ENCODE measurements at regions of chr6 and their contacts with region 1.

Region 1: DNA sequence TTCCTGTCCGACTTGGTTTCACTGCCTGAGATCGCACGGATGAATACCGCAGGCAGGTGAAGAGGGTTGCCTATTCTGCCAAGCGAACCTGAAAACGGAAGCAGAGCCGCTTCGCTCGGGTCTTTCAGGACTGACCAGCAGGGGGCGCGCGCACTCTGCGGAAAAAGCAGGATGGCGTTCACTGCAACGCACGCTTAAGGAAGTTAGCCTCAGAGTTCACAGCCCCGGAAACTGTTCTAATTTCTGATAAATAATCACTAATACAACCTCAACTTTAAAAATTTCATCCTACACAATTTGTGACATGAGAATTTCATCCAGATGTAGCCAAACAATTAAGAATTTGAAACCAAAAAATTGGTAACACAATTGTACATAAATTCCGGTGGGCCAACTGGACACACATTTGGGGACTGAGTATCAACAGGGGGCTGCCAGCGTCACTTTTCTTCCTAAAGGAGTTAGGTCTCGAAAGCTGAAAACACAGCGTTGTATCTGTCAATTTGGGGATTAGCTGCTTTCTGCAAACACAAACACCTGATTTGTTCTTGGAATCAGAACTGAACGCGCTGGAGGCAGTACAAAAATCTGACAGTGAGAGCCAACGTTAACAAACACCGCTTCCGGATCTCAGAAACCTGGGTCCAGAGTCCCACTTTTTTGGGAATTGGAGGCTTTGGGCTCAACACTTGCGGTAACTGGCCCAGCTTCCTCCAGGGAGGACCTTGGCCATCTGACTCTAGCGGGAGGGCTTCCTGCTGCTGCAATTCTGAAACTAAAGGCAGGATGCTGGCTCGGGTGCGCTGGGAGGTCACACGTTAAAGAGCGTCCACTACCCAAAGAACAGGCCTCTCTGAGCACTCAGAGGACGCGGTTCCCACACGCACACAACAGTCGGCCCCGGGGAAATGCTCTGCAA is 8.8 kb downstream of the PXDC1 start:
- DNase-seq: peak; percentile 74
- H3K4me3 ChIP-seq: no peak overlapping the region
- H3K27ac ChIP-seq: peak overlapping the region; percentile 13
- H3K4me1 ChIP-seq: peaks cover 23% of the 10 kb centered on the region
- H3K27me3 ChIP-seq: no peaks in the 10 kb centered on the region
- CTCF ChIP-seq: peak; percentile 82 to 90

Region 2: DNA sequence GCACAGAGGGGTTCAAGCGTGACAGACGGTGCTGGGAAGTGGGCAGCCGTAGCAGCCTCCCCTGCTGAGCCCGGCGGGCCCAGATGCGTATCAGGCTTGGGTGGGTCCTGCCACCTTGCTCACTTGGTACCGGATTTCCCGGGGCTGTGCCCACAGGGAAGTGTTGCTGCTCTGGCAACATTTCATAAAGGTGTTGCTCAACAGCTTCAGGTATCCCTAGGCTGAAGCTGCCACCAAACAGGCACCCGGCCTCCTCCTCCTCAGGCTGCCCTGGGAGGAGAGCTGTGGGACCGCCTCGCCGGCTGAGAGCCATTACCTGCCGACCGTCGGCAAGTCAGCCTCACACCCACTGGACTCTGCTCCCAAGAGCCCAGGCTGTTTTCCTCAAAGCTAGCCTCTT is 472.4 kb before region 1 on chr6:
- CTCF ChIA-PET with region 1: no interaction called
- dilution Hi-C with region 1: loop called (anchors 5 kb)
- in situ Hi-C with region 1: no loop called
- intact Hi-C with region 1: no loop called
- DNase-seq: no peak
- H3K4me3 ChIP-seq: no peak overlapping the region
- H3K27ac ChIP-seq: no peak overlapping the region
- H3K4me1 ChIP-seq: no peaks in the 10 kb centered on the region
- H3K27me3 ChIP-seq: no peaks in the 10 kb centered on the region
- CTCF ChIP-seq: no peak

Region 3: DNA sequence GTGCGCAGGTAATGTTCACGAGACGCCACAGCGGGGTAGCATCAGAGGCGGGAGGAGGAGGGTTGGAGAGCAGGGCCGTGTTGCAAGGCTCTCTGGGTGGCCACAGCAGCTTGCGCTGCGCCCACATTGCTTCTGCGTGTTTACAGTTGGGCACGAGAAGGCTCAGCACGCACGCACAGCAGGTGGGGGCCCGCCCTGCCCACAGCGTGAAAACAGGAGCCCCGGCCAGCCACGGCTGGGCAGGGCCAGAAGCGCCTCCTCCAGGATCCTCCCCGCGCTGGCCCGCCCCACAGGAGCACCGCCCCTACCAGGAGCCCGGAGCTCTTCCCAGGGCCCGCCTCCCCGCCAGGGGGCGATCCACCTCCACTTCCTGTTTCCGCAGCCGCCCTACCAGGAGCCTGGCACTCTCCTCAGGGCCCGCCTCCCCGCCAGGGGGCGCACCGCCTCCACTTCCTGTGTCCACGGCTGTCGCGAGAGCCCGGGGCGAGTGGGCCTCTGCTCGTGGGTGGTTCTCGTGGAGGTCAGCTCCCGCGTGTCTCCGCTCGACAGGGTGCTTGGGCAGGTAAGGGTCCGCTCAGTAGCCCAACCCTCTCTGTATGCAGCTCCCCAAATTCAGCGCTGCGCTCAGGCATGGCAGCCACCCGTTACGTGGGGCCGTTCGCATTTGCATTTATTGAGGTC is 106.4 kb after region 1 on chr6 and contains the start of gene FAM50B:
- CTCF ChIA-PET with region 1: interaction called, 10 read pairs
- dilution Hi-C with region 1: no loop called
- in situ Hi-C with region 1: no loop called
- intact Hi-C with region 1: loop called (anchors 1 kb)
- DNase-seq: peak; percentile 81
- H3K4me3 ChIP-seq: peak within 1 kb of the TSS; percentile 44 to 62 (median 59)
- H3K27ac ChIP-seq: peak within 1 kb of the TSS; percentile 87
- H3K4me1 ChIP-seq: peaks cover 12% of the 10 kb centered on the region
- H3K27me3 ChIP-seq: no peaks in the 10 kb centered on the region
- CTCF ChIP-seq: peak; percentile 48 to 91
- total RNA-seq, gene FAM50B: 4.4 to 7.3 TPM

Region 4: DNA sequence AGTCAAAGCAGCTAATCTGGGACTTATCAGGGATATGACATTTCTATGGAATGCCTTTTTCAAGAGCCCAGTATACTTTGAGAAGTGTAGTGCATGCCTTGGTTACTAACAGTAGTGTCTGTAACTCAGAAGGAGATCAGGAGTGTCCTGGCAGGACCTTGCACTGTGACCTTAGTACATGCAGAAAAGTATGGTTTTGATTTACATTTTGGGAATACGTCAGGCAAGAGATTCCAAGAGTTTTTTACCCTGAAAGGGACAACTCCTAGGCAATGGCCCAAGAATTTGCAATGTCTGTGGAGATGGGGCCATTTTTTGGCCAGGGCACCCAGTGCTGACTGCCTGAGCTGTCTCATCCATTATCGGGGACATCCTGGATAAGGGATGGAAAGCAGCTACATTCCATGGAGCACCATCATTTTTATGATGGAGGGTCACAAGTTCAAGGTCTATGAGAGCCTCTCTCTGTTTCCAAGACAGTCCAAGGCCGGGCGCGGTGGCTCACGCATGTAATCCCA is 186.7 kb after region 1 on chr6:
- CTCF ChIA-PET with region 1: interaction called, 3 read pairs
- dilution Hi-C with region 1: no loop called
- in situ Hi-C with region 1: loop called in 1 of 2 experiments (anchors 10 kb)
- intact Hi-C with region 1: loop called (anchors 1 kb)
- DNase-seq: no peak
- H3K4me3 ChIP-seq: no peak overlapping the region
- H3K27ac ChIP-seq: no peak overlapping the region
- H3K4me1 ChIP-seq: no peaks in the 10 kb centered on the region
- H3K27me3 ChIP-seq: no peaks in the 10 kb centered on the region
- CTCF ChIP-seq: no peak

Region 5: GRCh38 chr6:3977875-3978711 is 235.4 kb after region 1 on chr6:
- CTCF ChIA-PET with region 1: interaction called, 4 read pairs
- dilution Hi-C with region 1: no loop called
- in situ Hi-C with region 1: no loop called
- intact Hi-C with region 1: loop called (anchors 1 kb)
- DNase-seq: peak; percentile 56
- H3K4me3 ChIP-seq: no peak overlapping the region
- H3K27ac ChIP-seq: no peak overlapping the region
- H3K4me1 ChIP-seq: no peaks in the 10 kb centered on the region
- H3K27me3 ChIP-seq: no peaks in the 10 kb centered on the region
- CTCF ChIP-seq: peak; percentile 50 to 59

Region 6: GRCh38 chr6:4008324-4009047 is 265.8 kb after region 1 on chr6:
- CTCF ChIA-PET with region 1: no interaction called
- dilution Hi-C with region 1: no loop called
- in situ Hi-C with region 1: loop called in 1 of 2 experiments (anchors 5 kb)
- intact Hi-C with region 1: loop called (anchors 5 kb)
- DNase-seq: peak; percentile 63
- H3K4me3 ChIP-seq: no peak overlapping the region
- H3K27ac ChIP-seq: peak overlapping the region; percentile 18
- H3K4me1 ChIP-seq: peaks cover 7% of the 10 kb centered on the region
- H3K27me3 ChIP-seq: no peaks in the 10 kb centered on the region
- CTCF ChIP-seq: peak; percentile 56 to 66